ENCODE measurements at regions of chr5 and their contacts with region 1.

Region 1: GRCh38 chr5:91357012-91357813 is 25.9 kb downstream of the ARRDC3 start:
- DNase-seq: no peak
- H3K4me3 ChIP-seq: no peak overlapping the region
- H3K4me3 Mint-ChIP-seq: no peak overlapping the region
- H3K27ac ChIP-seq: no peak overlapping the region
- H3K27ac Mint-ChIP-seq: no peak overlapping the region
- H3K4me1 ChIP-seq: peaks cover 26% of the 10 kb centered on the region in 2 donors
- H3K4me1 Mint-ChIP-seq: peaks cover 36% of the 10 kb centered on the region
- H3K27me3 ChIP-seq: no peaks in the 10 kb centered on the region
- H3K27me3 Mint-ChIP-seq: peaks cover 0 to 2% (median 0%) of the 10 kb centered on the region in 3 donors
- CTCF ChIP-seq: no peak

Region 2: DNA sequence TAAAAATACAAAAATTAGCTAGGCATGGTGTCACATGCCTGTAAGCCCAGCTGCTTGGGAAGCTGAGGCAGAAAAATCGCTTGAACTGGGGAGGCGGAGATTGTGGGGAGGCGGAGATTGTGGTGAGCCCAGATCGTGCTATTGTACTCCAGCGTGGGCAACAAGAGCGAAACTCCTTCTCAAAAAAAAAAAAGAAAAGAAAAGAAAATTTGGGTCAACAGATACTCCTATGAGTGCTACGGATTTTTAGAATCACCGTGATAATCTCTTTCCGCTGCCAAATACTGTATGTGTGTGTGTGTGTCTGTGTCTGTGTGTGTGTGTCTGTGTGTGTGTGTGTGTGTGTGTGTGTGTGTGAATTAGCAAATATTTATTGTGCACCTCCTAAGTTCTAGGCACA is 38.5 kb before region 1 on chr5:
- intact Hi-C with region 1: loop called in 1 of 2 experiments (anchors 5 kb)
- DNase-seq: no peak
- H3K4me3 ChIP-seq: no peak overlapping the region
- H3K4me3 Mint-ChIP-seq: no peak overlapping the region
- H3K27ac ChIP-seq: no peak overlapping the region
- H3K27ac Mint-ChIP-seq: no peak overlapping the region
- H3K4me1 ChIP-seq: peaks cover 28 to 31% of the 10 kb centered on the region in 2 donors
- H3K4me1 Mint-ChIP-seq: peaks cover 30% of the 10 kb centered on the region
- H3K27me3 ChIP-seq: no peaks in the 10 kb centered on the region
- H3K27me3 Mint-ChIP-seq: peaks cover 0 to 3% (median 0%) of the 10 kb centered on the region in 3 donors
- CTCF ChIP-seq: no peak

Measured in CD14-positive monocyte (primary cell).